A549 (cell line): ENCODE measurements at regions of chr19 and their contacts with region 1.

Region 1: GRCh38 chr19:44845612-44846454 is at the start of gene NECTIN2:
- DNase-seq: peak; percentile 99 to 100
- ATAC-seq: peak; percentile 67 to 73
- H3K4me3 ChIP-seq: peak within 1 kb of the TSS; percentile 97
- H3K27ac ChIP-seq: peak within 1 kb of the TSS; percentile 94 to 95
- H3K4me1 ChIP-seq: peaks cover 37% of the 10 kb centered on the region
- CTCF ChIP-seq: peak; percentile 96
- EP300 ChIP-seq: no peak
- POLR2A ChIP-seq: peak; percentile 63
- RAD21 ChIP-seq: peak; percentile 73 to 75
- polyA plus RNA-seq, gene NECTIN2: 69.4 and 84.8 TPM in 2 replicates

Region 2: GRCh38 chr19:44611812-44612295 is 234.0 kb before region 1 on chr19:
- CTCF ChIA-PET with region 1: no interaction called
- POLR2A ChIA-PET with region 1: no interaction called
- DNase-seq: no peak
- ATAC-seq: no peak
- H3K4me3 ChIP-seq: no peak overlapping the region
- H3K27ac ChIP-seq: peak overlapping the region in 1 of 2 experiments; percentile 36; a peak in 1 of 6 replicates
- H3K4me1 ChIP-seq: peaks cover 39% of the 10 kb centered on the region
- CTCF ChIP-seq: no peak
- EP300 ChIP-seq: no peak
- POLR2A ChIP-seq: no peak
- RAD21 ChIP-seq: no peak

Region 3: DNA sequence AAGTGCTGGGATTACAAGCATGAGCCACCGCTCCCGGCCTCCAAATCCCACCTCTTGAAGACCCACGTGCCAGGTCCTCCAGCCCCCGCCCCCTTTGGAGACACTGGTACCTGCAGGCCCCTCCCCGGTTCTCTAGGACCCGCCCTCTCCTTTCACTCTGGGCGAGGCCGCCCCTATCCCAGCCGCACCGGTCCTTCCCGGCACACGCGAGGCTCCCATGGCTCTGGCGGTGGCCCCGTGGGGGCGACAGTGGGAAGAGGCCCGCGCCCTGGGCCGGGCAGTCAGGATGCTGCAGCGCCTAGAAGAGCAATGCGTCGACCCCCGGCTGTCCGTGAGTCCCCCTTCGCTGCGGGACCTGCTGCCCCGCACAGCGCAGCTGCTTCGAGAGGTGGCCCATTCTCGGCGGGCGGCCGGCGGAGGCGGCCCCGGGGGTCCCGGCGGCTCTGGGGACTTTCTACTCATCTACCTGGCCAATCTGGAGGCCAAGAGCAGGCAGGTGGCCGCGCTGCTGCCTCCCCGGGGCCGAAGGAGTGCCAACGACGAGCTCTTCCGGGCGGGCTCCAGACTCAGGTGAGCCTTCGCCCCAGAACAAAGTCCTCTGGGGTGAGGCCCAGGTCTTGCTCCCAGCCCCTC is 68.0 kb before region 1 on chr19 and contains the start of gene CBLC:
- CTCF ChIA-PET with region 1: interaction called, 117 read pairs
- POLR2A ChIA-PET with region 1: no interaction called
- DNase-seq: peak in 1 of 2 experiments; percentile 60
- ATAC-seq: peak; percentile 19 to 59; a peak in 4 of 6 replicates
- H3K4me3 ChIP-seq: no peak within 1 kb of the TSS
- H3K27ac ChIP-seq: peak within 1 kb of the TSS in 1 of 2 experiments; percentile 88; a peak in 3 of 6 replicates
- H3K4me1 ChIP-seq: peaks cover 33% of the 10 kb centered on the region
- CTCF ChIP-seq: no peak
- EP300 ChIP-seq: no peak
- POLR2A ChIP-seq: no peak
- RAD21 ChIP-seq: no peak
- polyA plus RNA-seq, gene CBLC: not detected in 2 replicates

Region 4: DNA sequence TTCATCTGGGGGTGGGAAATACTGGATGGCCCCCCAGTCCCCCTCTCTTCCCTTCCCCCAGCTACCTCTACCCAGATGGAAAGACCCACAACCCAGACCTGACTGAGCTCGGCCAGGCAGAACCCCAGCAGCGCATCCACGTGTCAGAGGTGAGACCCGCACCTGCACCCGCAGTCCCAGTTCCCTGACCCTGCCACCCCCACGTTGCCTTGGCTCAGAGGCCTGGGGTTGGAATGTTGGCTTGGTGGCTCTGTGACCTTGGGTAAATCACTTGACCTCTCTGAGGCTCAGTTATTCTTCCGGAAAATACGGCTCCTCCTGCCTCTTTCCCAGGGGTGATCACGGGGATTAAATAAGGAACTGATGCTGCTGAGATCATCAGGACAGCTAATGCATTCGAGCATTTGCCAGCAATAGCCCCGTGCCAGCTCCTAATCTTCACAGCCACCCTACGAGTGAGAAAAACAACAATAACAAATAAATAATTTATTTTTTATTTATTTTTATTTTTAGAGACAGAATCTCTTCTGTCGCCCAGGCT is 55.8 kb before region 1 on chr19:
- CTCF ChIA-PET with region 1: interaction called, 117 read pairs
- POLR2A ChIA-PET with region 1: no interaction called
- DNase-seq: no peak
- ATAC-seq: no peak
- H3K4me3 ChIP-seq: no peak overlapping the region
- H3K27ac ChIP-seq: no peak overlapping the region
- H3K4me1 ChIP-seq: no peaks in the 10 kb centered on the region
- CTCF ChIP-seq: no peak
- EP300 ChIP-seq: no peak
- POLR2A ChIP-seq: no peak
- RAD21 ChIP-seq: no peak

Region 5: GRCh38 chr19:44800461-44800860 is 45.4 kb before region 1 on chr19:
- CTCF ChIA-PET with region 1: interaction called, 68 read pairs
- POLR2A ChIA-PET with region 1: no interaction called
- DNase-seq: peak; percentile 89 to 97
- ATAC-seq: peak; percentile 95 to 98
- H3K4me3 ChIP-seq: no peak overlapping the region
- H3K27ac ChIP-seq: peak overlapping the region; percentile 62 to 79; a peak in 5 of 6 replicates
- H3K4me1 ChIP-seq: peaks cover 19% of the 10 kb centered on the region
- CTCF ChIP-seq: peak; percentile 92
- EP300 ChIP-seq: no peak
- POLR2A ChIP-seq: no peak
- RAD21 ChIP-seq: peak; percentile 81 to 86

Region 6: GRCh38 chr19:44808463-44809371 is 37.1 kb before region 1 on chr19 and contains the start of gene BCAM:
- CTCF ChIA-PET with region 1: interaction called, 68 read pairs
- POLR2A ChIA-PET with region 1: interaction called, 4 read pairs
- DNase-seq: peak; percentile 53 to 93
- ATAC-seq: peak; percentile 52 to 72
- H3K4me3 ChIP-seq: peak within 1 kb of the TSS; percentile 69
- H3K27ac ChIP-seq: peak within 1 kb of the TSS; percentile 88 to 89
- H3K4me1 ChIP-seq: peaks cover 35% of the 10 kb centered on the region
- CTCF ChIP-seq: no peak
- EP300 ChIP-seq: no peak
- POLR2A ChIP-seq: peak; percentile 76
- RAD21 ChIP-seq: no peak
- polyA plus RNA-seq, gene BCAM: 15.2 and 18.4 TPM in 2 replicates

Region 7: DNA sequence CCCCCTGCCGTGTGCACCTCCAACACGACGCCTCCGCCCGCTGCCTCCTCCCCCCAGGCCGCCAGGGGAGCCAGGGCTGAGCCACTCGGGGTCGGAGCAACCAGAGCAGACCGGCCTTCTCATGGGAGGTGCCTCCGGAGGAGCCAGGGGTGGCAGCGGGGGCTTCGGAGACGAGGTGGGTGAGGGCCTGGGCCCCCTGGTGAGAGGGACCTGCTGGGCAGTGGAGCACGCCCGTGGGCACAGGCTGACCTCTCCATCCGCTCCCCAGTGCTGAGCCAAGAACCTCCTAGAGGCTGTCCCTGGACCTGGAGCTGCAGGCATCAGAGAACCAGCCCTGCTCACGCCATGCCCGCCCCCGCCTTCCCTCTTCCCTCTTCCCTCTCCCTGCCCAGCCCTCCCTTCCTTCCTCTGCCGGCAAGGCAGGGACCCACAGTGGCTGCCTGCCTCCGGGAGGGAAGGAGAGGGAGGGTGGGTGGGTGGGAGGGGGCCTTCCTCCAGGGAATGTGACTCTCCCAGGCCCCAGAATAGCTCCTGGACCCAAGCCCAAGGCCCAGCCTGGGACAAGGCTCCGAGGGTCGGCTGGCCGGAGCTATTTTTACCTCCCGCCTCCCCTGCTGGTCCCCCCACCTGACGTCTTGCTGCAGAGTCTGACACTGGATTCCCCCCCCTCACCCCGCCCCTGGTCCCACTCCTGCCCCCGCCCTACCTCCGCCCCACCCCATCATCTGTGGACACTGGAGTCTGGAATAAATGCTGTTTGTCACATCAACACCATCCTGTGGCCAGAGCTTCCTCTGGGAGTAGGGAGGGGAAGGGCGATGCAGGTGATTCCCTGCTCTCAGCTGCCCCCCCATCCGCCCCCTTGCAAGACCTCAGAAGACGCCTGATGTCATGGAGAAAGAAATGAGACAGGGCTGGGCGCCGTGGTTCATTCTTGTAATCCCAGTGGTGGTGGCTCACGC is 24.9 kb before region 1 on chr19:
- CTCF ChIA-PET with region 1: interaction called, 15 read pairs
- POLR2A ChIA-PET with region 1: interaction called, 4 read pairs
- DNase-seq: no peak
- ATAC-seq: peak in 1 of 2 experiments; percentile 38; a peak in 3 of 6 replicates
- H3K4me3 ChIP-seq: no peak overlapping the region
- H3K27ac ChIP-seq: no peak overlapping the region
- H3K4me1 ChIP-seq: peaks cover 12% of the 10 kb centered on the region; the same call in 2 of the 3 replicates
- CTCF ChIP-seq: no peak
- EP300 ChIP-seq: no peak
- POLR2A ChIP-seq: no peak
- RAD21 ChIP-seq: no peak